ENCODE measurements at regions of chr6 and their contacts with region 1.

Region 1: DNA sequence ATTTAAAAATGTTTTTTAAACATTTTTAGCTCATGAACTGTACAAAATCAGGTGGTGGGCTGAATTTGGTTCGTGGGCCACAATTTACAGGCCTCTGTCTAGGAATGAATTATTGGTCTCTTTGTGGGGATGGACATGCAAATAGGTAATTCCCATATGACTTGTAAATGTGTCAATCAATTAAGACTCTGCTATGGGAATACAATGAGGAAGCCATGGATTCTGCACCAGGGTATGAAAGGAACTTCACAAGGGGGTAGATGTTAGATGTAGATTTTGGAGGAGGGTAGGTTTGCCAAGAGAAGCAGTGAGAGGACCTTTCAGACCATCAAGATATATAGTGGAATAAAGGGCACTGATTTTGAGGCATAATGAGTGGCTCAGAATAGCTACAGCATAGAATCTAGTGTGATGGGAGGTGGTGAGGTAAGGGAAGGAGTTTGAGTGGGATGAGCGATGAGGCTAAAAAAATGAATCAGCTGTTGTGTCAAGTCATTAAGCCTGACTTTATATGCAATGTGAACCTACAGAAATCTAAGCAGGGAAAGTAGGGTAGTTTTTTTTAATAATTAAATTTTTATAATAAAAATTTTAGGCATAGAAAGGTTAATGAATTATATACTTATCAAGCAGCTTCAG is 32.6 kb upstream of the RNF182 start:
- DNase-seq: no peak
- ATAC-seq: no peak
- H3K4me3 ChIP-seq: no peak overlapping the region
- H3K27ac ChIP-seq: no peak overlapping the region
- H3K4me1 ChIP-seq: no peaks in the 10 kb centered on the region
- H3K27me3 ChIP-seq: no peaks in the 10 kb centered on the region
- CTCF ChIP-seq: no peak
- EP300 ChIP-seq: no peak
- POLR2A ChIP-seq: no peak
- RAD21 ChIP-seq: no peak

Region 2: DNA sequence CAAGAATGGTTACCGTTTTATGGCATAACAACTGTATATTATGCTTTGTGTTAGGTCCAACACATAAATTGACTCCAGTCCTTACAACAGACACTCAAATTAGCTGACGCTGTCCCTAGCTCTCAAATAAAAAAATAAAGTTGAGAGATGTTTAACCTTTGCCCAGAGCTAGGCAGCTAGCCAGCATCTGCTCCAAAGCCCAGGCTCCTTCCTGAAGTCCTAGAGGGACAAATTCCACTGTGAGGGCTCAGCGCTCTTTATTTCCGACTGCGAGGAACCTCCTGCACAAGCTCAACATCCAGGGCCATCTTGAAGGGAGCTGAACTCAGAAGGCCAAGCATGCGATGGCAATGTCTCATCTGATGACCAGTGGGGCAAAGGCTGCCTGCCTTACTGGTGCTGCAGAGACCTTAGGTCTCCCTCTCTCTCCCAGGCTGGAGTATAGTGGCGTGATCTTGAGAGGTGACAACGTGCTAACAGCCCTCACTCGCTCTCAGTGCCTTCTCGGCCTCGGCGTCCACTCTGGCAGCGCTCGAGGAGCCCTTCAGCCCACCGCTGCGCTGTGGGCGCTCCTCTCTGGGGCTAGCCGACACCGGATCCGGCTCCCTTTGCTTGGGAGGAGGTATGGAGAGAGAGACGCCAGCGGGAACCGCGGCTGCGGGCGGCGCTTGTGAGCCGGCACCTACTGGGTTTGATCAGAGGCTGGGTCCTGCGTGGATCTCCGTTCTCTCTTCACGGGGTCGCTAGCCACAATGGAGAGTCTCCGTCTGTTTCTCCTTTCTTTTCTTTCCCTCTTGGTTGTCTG is 380.0 kb before region 1 on chr6:
- CTCF ChIA-PET with region 1: no interaction called
- POLR2A ChIA-PET with region 1: no interaction called
- in situ Hi-C with region 1: no loop called
- intact Hi-C with region 1: loop called (anchors 5 kb)
- DNase-seq: no peak
- ATAC-seq: peak; percentile 32; the same call in 2 of the 3 replicates
- H3K4me3 ChIP-seq: no peak overlapping the region
- H3K27ac ChIP-seq: no peak overlapping the region
- H3K4me1 ChIP-seq: peaks cover 11% of the 10 kb centered on the region
- H3K27me3 ChIP-seq: peaks cover 2 to 14% of the 10 kb centered on the region in 2 experiments; a peak in 3 of 5 replicates
- CTCF ChIP-seq: no peak
- EP300 ChIP-seq: no peak
- POLR2A ChIP-seq: no peak
- RAD21 ChIP-seq: no peak